ENCODE measurements at regions of chr1 and their contacts with region 1.

Region 1: DNA sequence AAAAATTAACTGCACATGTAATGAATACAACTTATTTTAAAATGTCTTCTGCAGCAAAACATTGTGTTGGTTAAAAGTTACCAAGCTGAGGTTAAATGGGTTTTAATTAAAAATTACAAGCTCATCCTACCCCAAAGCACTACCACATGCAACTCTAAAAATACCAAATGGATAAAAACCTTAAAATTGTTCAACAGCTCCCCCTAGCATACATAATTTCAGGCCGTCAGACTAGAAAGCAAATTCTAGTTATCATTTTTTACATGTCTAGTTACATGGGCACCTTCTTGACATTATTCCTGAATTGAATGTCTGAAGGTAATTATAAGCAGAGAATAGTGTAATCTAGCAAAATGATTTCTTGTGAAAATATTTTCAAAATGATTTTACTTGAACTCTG is 176.5 kb downstream of the C1orf21 start:
- DNase-seq: no peak
- ATAC-seq: peak in 5 of 8 donors; percentile 56 to 66 (median 59)
- H3K4me3 ChIP-seq: no peak overlapping the region
- H3K27ac ChIP-seq: peak overlapping the region in 6 of 10 donors; percentile 37 to 74 (median 56)
- H3K4me1 ChIP-seq: peaks cover 8 to 38% (median 31%) of the 10 kb centered on the region in 9 donors
- H3K27me3 ChIP-seq: no peaks in the 10 kb centered on the region
- CTCF ChIP-seq: peak; percentile 23 to 78 (median 68)

Region 2: GRCh38 chr1:184075055-184076029 is 488.0 kb before region 1 on chr1:
- intact Hi-C with region 1: loop called in 8 of 10 experiments (anchors 2 to 10 kb)
- DNase-seq: peak in 1 of 2 donors; percentile 67
- ATAC-seq: peak; percentile 65 to 91 (median 84)
- H3K4me3 ChIP-seq: no peak overlapping the region
- H3K27ac ChIP-seq: peak overlapping the region in 7 of 10 donors; percentile 2 to 69 (median 46)
- H3K4me1 ChIP-seq: peaks cover 0 to 29% (median 9%) of the 10 kb centered on the region in 9 donors
- H3K27me3 ChIP-seq: no peaks in the 10 kb centered on the region
- CTCF ChIP-seq: peak; percentile 55 to 91 (median 79)

Region 3: GRCh38 chr1:184242507-184242943 is 320.8 kb before region 1 on chr1:
- intact Hi-C with region 1: loop called in 9 of 10 experiments (anchors 1 to 10 kb)
- DNase-seq: peak in 1 of 2 donors; percentile 27
- ATAC-seq: peak; percentile 75 to 95 (median 92)
- H3K4me3 ChIP-seq: no peak overlapping the region
- H3K27ac ChIP-seq: peak overlapping the region in 4 of 10 donors; percentile 6 to 53 (median 45)
- H3K4me1 ChIP-seq: peaks cover 0 to 19% (median 10%) of the 10 kb centered on the region in 9 donors
- H3K27me3 ChIP-seq: no peaks in the 10 kb centered on the region
- CTCF ChIP-seq: peak; percentile 10 to 71 (median 43)

Region 4: GRCh38 chr1:184386312-184387068 is 176.8 kb before region 1 on chr1 and contains the start of gene C1orf21:
- intact Hi-C with region 1: loop called (anchors 2 to 10 kb)
- DNase-seq: peak; percentile 92
- ATAC-seq: peak; percentile 95 to 98 (median 96)
- H3K4me3 ChIP-seq: peak within 1 kb of the TSS; percentile 42 to 97 (median 86)
- H3K27ac ChIP-seq: peak within 1 kb of the TSS; percentile 77 to 95 (median 90)
- H3K4me1 ChIP-seq: peaks cover 0 to 43% (median 34%) of the 10 kb centered on the region in 9 donors
- H3K27me3 ChIP-seq: peaks cover 0 to 10% (median 0%) of the 10 kb centered on the region in 7 donors
- CTCF ChIP-seq: no peak
- total RNA-seq, gene C1orf21: 50.8 to 76.7 (median 69.3) TPM

Region 5: GRCh38 chr1:184465489-184466146 is 97.7 kb before region 1 on chr1:
- intact Hi-C with region 1: loop called in 2 of 10 experiments (anchors 5 kb)
- DNase-seq: peak in 1 of 2 donors; percentile 39
- ATAC-seq: peak in 7 of 8 donors; percentile 48 to 84 (median 66)
- H3K4me3 ChIP-seq: no peak overlapping the region
- H3K27ac ChIP-seq: peak overlapping the region in 4 of 10 donors; percentile 10 to 24 (median 18)
- H3K4me1 ChIP-seq: peaks cover 7 to 84% (median 36%) of the 10 kb centered on the region in 9 donors
- H3K27me3 ChIP-seq: no peaks in the 10 kb centered on the region
- CTCF ChIP-seq: peak in 8 of 9 donors; percentile 16 to 64 (median 40)

Region 6: DNA sequence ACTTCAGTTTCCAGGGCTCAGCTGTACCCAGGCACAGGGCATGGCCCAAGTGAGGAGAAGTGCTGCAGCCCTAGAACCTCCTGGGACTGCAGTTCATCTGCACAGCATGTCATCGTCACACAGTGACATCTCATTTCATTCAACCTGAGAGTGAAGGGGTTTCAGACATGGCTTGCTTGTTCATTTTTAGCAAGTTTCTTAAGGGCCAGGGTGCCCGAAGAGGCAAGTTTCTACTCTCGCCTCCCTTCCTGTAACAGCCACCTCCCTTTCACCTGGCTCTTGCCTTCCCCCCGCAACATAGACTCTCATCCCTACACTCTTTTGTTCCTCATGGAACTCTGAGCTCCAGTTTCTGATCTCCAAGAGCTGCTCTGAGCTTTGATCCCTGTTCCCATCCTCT is 68.4 kb before region 1 on chr1:
- intact Hi-C with region 1: loop called in 2 of 10 experiments (anchors 5 kb)
- DNase-seq: no peak
- ATAC-seq: no peak
- H3K4me3 ChIP-seq: no peak overlapping the region
- H3K27ac ChIP-seq: peak overlapping the region in 7 of 10 donors; percentile 49 to 89 (median 77)
- H3K4me1 ChIP-seq: peaks cover 14 to 83% (median 58%) of the 10 kb centered on the region in 9 donors
- H3K27me3 ChIP-seq: no peaks in the 10 kb centered on the region
- CTCF ChIP-seq: no peak

Region 7: DNA sequence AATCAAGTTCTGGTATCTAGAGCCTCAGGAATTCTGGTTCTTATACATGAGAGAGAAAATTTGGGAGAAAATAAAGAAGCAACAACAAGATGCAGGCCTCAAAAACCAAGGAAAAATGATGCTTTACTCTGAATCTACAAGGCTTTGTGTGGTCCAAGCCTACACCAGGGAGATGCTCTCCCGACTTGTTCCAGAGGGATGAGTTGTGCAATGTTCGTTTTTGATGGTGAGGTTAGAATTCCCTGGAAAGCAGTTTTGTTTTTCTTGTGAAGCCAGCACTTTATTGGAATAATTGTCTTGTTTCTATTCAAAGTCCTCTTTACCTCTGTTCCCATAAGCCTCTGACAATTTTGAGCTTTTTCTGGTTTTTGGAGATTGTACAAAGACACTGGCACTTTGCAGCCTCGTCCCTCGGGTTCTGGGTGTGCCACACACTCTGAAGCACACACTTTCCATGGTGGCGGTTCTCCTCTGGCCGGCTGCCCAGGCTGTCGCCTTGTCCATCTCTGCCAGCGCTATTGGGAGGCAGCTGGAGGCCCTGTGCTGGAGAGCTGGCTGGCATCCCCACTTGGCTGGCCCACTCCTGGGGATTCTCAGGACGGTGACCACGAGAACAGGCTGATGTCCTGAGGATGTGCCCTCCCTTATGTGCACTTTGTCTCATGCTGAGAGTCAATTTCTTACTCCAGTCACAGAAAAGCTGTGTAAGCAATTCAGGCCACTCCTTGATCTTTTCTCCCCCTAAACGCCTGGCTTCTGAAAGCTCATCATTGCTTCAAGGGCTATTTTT is 121.2 kb after region 1 on chr1:
- intact Hi-C with region 1: no loop called
- DNase-seq: peak in 1 of 2 donors; percentile 54
- ATAC-seq: peak in 7 of 8 donors; percentile 16 to 72 (median 58)
- H3K4me3 ChIP-seq: no peak overlapping the region
- H3K27ac ChIP-seq: no peak overlapping the region
- H3K4me1 ChIP-seq: peaks cover 0 to 20% (median 0%) of the 10 kb centered on the region in 9 donors
- H3K27me3 ChIP-seq: no peaks in the 10 kb centered on the region
- CTCF ChIP-seq: no peak